Activated naive CD8-positive, alpha-beta T cell treated with anti-CD3 and anti-CD28 coated beads, Interleukin-2, amount 10 ng/mL, durations not matched to agents 7 days and 5 days (primary cell): ENCODE measurements at regions of chr5 and their contacts with region 1.

Region 1: GRCh38 chr5:172770675-172771438 is at the start of gene DUSP1:
- DNase-seq: peak; percentile 96
- ATAC-seq: peak; percentile 62
- H3K4me3 Mint-ChIP-seq: peak within 1 kb of the TSS; percentile 91
- H3K27ac Mint-ChIP-seq: peak within 1 kb of the TSS; percentile 98
- H3K4me1 Mint-ChIP-seq: peaks cover 29% of the 10 kb centered on the region
- H3K27me3 Mint-ChIP-seq: no peaks in the 10 kb centered on the region
- total RNA-seq, gene DUSP1: 39.4 to 41.5 TPM

Region 2: DNA sequence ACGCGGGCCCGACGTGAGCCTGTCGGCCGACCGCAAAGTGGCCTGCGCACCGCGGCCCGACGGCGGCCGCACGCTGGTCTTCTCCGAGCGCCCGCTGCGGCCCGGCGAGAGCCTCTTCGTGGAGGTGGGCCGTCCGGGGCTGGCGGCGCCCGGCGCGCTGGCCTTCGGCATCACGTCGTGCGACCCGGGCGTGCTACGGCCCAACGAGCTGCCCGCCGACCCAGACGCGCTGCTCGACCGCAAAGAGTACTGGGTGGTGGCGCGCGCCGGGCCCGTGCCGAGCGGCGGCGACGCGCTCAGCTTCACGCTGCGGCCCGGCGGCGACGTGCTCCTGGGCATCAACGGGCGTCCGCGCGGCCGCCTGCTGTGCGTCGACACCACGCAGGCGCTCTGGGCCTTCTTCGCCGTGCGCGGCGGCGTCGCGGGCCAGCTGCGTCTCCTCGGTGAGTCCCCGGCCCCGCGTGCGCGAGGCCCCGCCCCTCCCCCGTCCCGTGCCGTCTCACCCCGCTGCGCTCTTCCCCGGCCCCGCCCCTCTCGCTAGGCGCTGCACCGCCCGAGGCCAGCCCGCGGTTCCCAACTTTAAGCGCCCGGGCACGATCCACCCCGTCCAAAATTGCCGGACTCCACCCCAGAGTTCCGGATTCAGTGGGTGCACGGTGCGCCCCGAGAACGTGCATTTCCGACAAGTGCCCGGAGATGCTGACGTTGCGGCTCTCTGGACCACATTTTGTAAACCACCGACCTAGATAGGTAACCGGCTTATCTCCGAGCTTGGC is 87.0 kb before region 1 on chr5:
- POLR2A ChIA-PET with region 1: no interaction called
- DNase-seq: peak; percentile 67
- ATAC-seq: peak; percentile 48
- H3K4me3 Mint-ChIP-seq: peak overlapping the region; percentile 67
- H3K27ac Mint-ChIP-seq: peak overlapping the region; percentile 22
- H3K4me1 Mint-ChIP-seq: peaks cover 12% of the 10 kb centered on the region
- H3K27me3 Mint-ChIP-seq: peaks cover 22% of the 10 kb centered on the region

Region 3: GRCh38 chr5:172714491-172715421 is 56.1 kb before region 1 on chr5:
- POLR2A ChIA-PET with region 1: interaction called, 12 read pairs
- DNase-seq: peak; percentile 67
- ATAC-seq: peak; percentile 82
- H3K4me3 Mint-ChIP-seq: no peak overlapping the region
- H3K27ac Mint-ChIP-seq: no peak overlapping the region
- H3K4me1 Mint-ChIP-seq: peaks cover 3% of the 10 kb centered on the region
- H3K27me3 Mint-ChIP-seq: peaks cover 14% of the 10 kb centered on the region

Region 4: DNA sequence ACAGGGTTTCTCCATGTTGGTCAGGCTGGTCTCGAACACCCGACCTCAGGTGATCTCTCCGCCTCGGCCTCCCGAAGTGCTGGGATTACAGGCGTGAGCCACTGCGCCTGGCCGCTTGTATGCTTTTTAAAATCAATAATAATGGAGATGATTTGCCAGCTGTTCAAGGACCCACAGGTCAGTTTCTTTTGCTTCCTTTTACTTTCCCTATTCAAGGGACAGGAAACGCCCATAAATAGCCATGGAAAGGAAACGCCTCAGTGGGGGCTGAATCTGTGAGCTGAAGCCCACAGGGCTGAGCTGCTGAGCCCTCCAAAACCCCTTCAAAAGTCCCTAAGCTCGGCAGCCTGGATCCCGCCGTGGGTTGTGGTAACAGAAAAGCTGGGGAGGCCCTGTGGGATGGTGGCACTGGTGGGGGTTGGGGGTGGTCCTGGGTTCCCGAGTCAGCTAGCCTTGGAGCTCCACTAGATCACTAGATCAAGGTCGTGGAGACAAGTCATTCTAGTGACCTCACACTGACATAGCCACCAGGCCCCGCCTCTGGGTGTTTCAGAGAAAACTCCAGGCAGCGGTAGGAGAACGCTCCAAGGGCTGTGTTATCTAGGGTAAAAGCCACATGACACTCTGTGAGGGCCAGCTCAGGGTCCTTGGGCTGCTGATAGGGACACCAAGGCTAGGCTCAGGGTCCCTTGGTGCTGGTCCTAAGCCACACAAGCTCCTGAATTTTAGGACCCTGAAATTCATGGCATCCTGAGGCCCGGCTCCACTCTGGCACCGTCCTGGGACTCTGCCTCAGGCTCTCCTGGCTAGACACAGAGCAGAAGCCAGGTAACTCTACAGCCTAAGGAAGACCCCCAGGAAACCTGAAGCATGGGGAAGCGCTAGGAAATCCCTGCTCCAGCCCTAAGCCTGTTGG is 18.2 kb after region 1 on chr5:
- POLR2A ChIA-PET with region 1: interaction called, 26 read pairs
- DNase-seq: peak; percentile 50
- ATAC-seq: peak; percentile 86
- H3K4me3 Mint-ChIP-seq: no peak overlapping the region
- H3K27ac Mint-ChIP-seq: peak overlapping the region; percentile 67
- H3K4me1 Mint-ChIP-seq: peaks cover 5% of the 10 kb centered on the region
- H3K27me3 Mint-ChIP-seq: no peaks in the 10 kb centered on the region

Region 5: GRCh38 chr5:172806897-172807672 is 36.2 kb after region 1 on chr5:
- POLR2A ChIA-PET with region 1: interaction called, 21 read pairs
- DNase-seq: peak; percentile 81
- ATAC-seq: peak; percentile 98
- H3K4me3 Mint-ChIP-seq: peak overlapping the region; percentile 73
- H3K27ac Mint-ChIP-seq: peak overlapping the region; percentile 84
- H3K4me1 Mint-ChIP-seq: peaks cover 12% of the 10 kb centered on the region
- H3K27me3 Mint-ChIP-seq: no peaks in the 10 kb centered on the region

Region 6: DNA sequence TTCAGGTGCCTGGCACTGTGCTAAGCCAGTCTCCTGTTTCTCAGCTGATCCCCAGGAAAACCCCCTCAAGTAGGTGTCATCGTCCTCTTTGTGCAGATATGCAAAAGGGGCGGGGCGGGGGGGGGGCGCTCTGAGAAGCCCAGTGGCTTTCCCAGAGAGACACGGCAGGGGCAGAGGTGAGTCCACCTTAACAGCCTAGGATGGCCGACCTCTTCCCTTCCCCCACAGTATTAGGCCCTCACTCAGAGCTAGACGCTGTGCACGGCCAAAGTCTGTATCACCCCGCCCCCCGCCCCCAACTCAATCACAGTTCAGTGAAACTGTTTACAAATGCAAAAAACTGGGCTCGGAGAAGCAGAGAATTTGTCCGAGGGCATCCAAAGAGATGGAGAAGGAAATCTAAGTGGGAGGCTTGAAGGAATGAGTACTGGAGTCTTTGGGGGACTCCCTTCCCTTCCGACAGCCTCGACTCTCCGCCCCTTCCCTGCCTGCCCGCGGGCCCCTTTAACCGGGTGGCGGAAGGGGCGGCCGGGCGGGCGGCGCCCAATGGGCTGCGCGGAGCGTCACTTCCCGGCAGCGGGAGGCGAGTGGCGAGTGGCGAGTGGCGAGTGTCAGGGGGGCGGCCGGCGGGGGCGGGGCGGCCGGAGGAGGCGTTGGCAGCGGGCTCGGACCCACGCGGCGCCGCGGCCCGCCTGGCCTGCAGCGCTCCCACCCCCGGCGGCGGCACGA is 63.0 kb after region 1 on chr5 and contains the start of gene ERGIC1:
- POLR2A ChIA-PET with region 1: interaction called, 40 read pairs
- DNase-seq: peak; percentile 84
- ATAC-seq: peak; percentile 85
- H3K4me3 Mint-ChIP-seq: peak within 1 kb of the TSS; percentile 89
- H3K27ac Mint-ChIP-seq: peak within 1 kb of the TSS; percentile 82
- H3K4me1 Mint-ChIP-seq: peaks cover 36% of the 10 kb centered on the region
- H3K27me3 Mint-ChIP-seq: no peaks in the 10 kb centered on the region
- total RNA-seq, gene ERGIC1: 59.5 to 63.2 TPM

Region 7: DNA sequence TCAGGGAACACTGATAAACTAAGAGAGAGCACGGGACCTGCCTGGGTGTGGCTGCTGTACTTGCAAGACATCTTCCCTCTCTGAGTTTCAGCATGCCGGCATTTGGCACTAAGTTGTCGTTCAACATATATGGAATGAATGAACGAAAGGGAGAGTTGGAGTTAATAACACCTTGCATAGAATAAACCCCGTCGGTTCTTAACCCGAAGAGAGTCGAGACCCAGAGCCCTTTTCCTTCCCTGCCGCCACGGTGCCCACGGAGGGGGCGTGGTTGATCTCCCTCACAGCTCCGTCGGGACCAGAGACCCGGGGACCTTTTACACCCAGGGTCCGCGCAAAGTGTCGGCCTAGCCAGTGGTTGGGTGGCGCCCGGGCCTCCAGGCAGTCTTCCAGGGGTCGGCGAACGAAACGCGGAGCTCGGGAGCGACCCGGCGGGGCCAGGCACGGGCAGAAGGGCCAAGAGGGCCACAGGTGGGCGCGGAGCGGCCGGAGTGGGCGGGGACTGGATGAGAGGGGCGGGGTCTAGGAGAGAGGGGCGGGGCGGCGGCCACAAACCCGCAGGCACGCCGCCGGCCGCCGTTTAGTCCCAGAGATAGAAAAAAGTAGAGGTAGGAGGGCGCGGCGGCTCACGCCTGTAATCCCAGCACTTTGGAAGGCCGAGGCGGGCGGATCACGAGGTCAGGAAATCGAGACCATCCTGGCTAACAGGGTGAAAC is 187.6 kb after region 1 on chr5:
- POLR2A ChIA-PET with region 1: interaction called, 13 read pairs
- DNase-seq: peak; percentile 75
- ATAC-seq: peak; percentile 55
- H3K4me3 Mint-ChIP-seq: peak overlapping the region; percentile 93
- H3K27ac Mint-ChIP-seq: peak overlapping the region; percentile 97
- H3K4me1 Mint-ChIP-seq: peaks cover 24% of the 10 kb centered on the region
- H3K27me3 Mint-ChIP-seq: no peaks in the 10 kb centered on the region

Region 8: DNA sequence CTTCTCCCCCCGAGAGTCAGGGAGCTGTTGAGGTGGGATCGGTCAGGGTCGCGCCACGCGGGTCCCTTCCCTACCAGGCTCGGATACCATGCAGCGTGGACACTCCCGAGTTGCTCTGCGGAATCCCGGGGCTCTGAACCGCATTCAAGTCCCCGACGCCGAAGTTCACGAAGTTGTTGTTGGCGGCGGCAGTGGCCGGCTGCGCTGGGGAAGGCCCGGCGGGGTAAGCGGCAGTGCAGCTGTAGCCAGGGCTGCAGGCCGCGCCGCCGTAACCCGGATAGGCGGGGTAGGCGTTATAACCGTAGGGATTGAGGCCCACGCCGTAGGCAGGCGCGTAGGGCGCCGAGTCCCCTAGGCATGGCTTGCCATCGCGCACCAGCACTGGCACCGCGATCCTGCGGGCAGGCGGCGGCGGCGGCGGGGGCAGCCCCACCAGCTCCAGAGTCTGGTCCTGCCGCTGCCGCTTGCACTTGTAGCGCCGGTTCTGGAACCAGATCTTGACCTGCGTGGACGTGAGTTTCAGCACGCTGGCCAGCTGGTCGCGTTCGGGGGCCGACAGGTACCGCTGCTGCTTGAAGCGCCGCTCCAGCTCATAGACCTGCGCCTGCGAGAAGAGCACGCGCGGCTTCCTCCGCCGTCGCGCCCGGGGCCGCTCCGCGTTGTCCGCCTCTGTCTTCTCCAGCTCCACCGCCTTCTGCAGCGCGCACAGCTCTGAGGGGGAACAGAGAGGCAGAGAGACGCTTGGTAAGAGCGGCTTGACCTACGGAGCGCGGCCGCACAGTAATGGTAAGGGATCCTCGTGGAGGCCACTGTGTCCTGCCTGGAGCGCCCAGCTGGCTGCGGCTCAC is 461.9 kb after region 1 on chr5:
- POLR2A ChIA-PET with region 1: no interaction called
- DNase-seq: peak; percentile 54
- ATAC-seq: no peak
- H3K4me3 Mint-ChIP-seq: no peak overlapping the region
- H3K27ac Mint-ChIP-seq: peak overlapping the region; percentile 72
- H3K4me1 Mint-ChIP-seq: peaks cover 18% of the 10 kb centered on the region
- H3K27me3 Mint-ChIP-seq: peaks cover 92% of the 10 kb centered on the region